ENCODE measurements at regions of chr9 and their contacts with region 1.

Region 1: GRCh38 chr9:132250324-132251262 is 88.7 kb downstream of the NTNG2 start:
- DNase-seq: no peak
- ATAC-seq: peak in 1 of 2 donors; percentile 18
- H3K4me3 ChIP-seq: no peak overlapping the region
- H3K27ac ChIP-seq: no peak overlapping the region
- H3K4me1 ChIP-seq: no peaks in the 10 kb centered on the region
- H3K27me3 ChIP-seq: peaks cover 17% of the 10 kb centered on the region
- CTCF ChIP-seq: no peak

Region 2: GRCh38 chr9:131762356-131762932 is 488.1 kb before region 1 on chr9:
- intact Hi-C with region 1: loop called (anchors 5 kb)
- DNase-seq: peak; percentile 85
- ATAC-seq: peak; percentile 95
- H3K4me3 ChIP-seq: no peak overlapping the region
- H3K27ac ChIP-seq: no peak overlapping the region
- H3K4me1 ChIP-seq: peaks cover 7% of the 10 kb centered on the region
- H3K27me3 ChIP-seq: peaks cover 11% of the 10 kb centered on the region
- CTCF ChIP-seq: peak; percentile 96

Measured in lower lobe of right lung (tissue), 2 donors.